ENCODE measurements at regions of chr1 and their contacts with region 1.

Region 1: DNA sequence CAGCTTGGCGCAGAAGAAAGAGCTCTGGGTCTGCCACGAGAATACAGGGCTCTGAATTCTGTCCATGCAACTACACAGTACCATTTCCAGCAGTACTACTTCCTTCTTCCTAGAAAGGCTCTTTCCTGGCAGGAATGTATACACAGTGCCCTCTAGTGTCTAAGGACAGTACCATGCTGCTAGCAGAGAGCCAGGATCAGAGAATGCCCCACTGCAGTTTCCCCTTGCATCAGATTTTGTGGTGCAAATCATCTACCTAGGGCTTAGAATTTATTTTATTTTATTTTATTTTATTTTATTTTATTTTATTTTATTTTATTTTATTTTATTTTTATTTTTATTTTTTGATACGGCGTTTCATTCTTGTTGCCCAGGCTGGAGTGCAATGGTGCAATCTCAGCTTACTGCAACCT is 50.8 kb downstream of the PAX7 start:
- DNase-seq: peak; percentile 66 to 73
- ATAC-seq: peak; percentile 85 to 92; a peak in 5 of 6 replicates
- H3K4me3 ChIP-seq: no peak overlapping the region
- H3K27ac ChIP-seq: peak overlapping the region; percentile 57 to 75; a peak in 4 of 6 replicates
- H3K4me1 ChIP-seq: peaks cover 8% of the 10 kb centered on the region
- CTCF ChIP-seq: peak; percentile 72
- EP300 ChIP-seq: no peak
- POLR2A ChIP-seq: no peak
- RAD21 ChIP-seq: peak; percentile 82 to 86

Region 2: GRCh38 chr1:18602533-18603211 is 78.8 kb before region 1 on chr1:
- CTCF ChIA-PET with region 1: interaction called, 112 read pairs
- POLR2A ChIA-PET with region 1: no interaction called
- DNase-seq: no peak
- ATAC-seq: peak; percentile 47 to 54; a peak in 4 of 6 replicates
- H3K4me3 ChIP-seq: no peak overlapping the region
- H3K27ac ChIP-seq: no peak overlapping the region
- H3K4me1 ChIP-seq: 0 out of 3 replicates have a peak, but pooled peaks cover under 1% of the 10 kb centered on the region
- CTCF ChIP-seq: no peak
- EP300 ChIP-seq: no peak
- POLR2A ChIP-seq: no peak
- RAD21 ChIP-seq: no peak

Region 3: DNA sequence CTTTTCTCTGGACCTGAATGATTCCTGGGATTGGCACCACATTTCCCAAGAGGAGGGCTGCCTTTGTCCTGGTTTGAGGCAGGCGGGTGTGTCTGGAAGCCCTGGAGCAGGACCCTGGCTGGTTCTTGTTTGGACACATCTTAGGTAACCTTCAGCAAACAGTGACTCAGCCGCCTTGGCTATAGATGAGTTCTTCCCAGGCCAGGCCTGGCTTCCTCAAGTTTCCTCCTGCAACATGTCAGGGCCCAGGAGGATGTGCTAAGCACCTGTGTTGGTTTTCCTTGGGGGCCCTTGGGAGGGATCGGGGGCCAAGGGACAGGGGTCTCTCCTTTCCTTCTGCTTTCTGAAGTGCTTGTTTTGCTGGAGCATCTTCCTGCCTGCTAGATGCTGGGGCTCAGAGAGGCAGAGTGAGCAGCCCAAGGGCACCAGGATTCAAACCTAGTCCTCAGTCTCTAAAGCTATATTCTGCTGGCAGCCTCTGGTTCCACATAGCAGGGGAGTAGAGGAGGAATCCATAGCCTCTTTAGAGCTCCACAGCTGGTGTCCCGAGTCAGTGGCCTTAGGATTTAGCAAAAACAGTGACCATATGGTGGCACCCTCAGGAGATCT is 12.5 kb before region 1 on chr1:
- CTCF ChIA-PET with region 1: interaction called, 15 read pairs
- POLR2A ChIA-PET with region 1: no interaction called
- DNase-seq: peak; percentile 92 to 93
- ATAC-seq: peak; percentile 95 to 97
- H3K4me3 ChIP-seq: no peak overlapping the region
- H3K27ac ChIP-seq: peak overlapping the region; percentile 89 to 97
- H3K4me1 ChIP-seq: peaks cover 58% of the 10 kb centered on the region
- CTCF ChIP-seq: no peak
- EP300 ChIP-seq: peak in 1 of 2 experiments; percentile 46; a peak in 1 of 5 replicates
- POLR2A ChIP-seq: no peak
- RAD21 ChIP-seq: no peak

Region 4: DNA sequence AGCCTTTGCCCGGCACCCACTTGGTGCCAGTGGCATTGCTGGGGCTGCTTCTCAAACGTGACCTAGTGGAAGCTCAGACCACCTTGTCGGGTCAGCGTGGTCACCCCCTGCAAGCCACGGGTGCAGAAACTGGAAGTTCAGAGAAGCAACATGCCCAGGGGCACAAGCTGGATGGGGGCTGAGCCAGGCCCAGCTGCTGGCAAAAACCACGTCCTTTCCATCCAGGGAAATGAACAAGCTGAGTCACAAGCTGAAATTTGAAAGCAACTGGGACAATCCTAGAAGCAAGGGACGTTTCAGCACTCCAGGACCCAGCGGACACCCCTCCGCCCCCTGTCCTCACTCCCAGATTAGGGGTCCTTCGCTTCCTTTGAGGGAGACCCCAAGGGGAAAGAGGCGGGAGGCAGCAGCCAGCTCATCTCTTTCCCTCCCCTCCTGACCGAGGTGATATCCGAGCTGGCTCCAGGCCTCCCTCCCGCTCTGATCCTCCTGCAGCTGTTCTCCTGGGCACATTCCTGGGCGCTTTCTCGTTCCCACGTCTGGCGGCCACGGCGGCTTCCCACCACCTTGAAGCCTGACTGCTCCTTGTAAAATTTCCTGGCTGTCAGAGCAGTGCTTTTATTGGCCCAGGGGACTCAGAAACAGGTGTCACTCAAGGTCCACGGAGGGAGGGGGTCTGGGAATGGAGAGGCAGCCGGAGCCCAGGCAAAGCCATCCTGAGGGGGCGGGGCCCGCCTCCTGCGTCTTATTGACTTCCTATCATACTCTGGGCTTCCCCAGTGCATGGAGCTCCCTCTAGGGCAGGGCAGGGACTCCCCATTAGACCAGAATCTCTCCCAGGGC is 12.0 kb after region 1 on chr1:
- CTCF ChIA-PET with region 1: interaction called, 13 read pairs
- POLR2A ChIA-PET with region 1: no interaction called
- DNase-seq: no peak
- ATAC-seq: no peak
- H3K4me3 ChIP-seq: no peak overlapping the region
- H3K27ac ChIP-seq: no peak overlapping the region
- H3K4me1 ChIP-seq: no peaks in the 10 kb centered on the region
- CTCF ChIP-seq: no peak
- EP300 ChIP-seq: no peak
- POLR2A ChIP-seq: no peak
- RAD21 ChIP-seq: no peak

Region 5: GRCh38 chr1:18705811-18706210 is 24.4 kb after region 1 on chr1:
- CTCF ChIA-PET with region 1: no interaction called
- POLR2A ChIA-PET with region 1: no interaction called
- DNase-seq: no peak
- ATAC-seq: no peak
- H3K4me3 ChIP-seq: no peak overlapping the region
- H3K27ac ChIP-seq: no peak overlapping the region
- H3K4me1 ChIP-seq: no peaks in the 10 kb centered on the region
- CTCF ChIP-seq: no peak
- EP300 ChIP-seq: no peak
- POLR2A ChIP-seq: no peak
- RAD21 ChIP-seq: no peak

Measured in A549 (cell line).